Panc1 (cell line): ENCODE measurements at regions of chr12 and their contacts with region 1.

Region 1: GRCh38 chr12:113325916-113326315 is 9.0 kb downstream of the SLC8B1 start:
- DNase-seq: no peak
- ATAC-seq: no peak
- H3K4me3 ChIP-seq: no peak overlapping the region
- H3K27ac ChIP-seq: no peak overlapping the region
- H3K4me1 ChIP-seq: peaks cover 3% of the 10 kb centered on the region; the same call in 1 of the 2 replicates
- H3K27me3 ChIP-seq: no peaks in the 10 kb centered on the region
- CTCF ChIP-seq: no peak

Region 2: GRCh38 chr12:113310489-113310888 is 15.4 kb before region 1 on chr12:
- CTCF ChIA-PET with region 1: interaction called, 19 read pairs
- POLR2A ChIA-PET with region 1: no interaction called
- in situ Hi-C with region 1: no loop called
- intact Hi-C with region 1: no loop called
- DNase-seq: no peak
- ATAC-seq: no peak
- H3K4me3 ChIP-seq: no peak overlapping the region
- H3K27ac ChIP-seq: no peak overlapping the region
- H3K4me1 ChIP-seq: no peaks in the 10 kb centered on the region
- H3K27me3 ChIP-seq: no peaks in the 10 kb centered on the region
- CTCF ChIP-seq: no peak

Region 3: DNA sequence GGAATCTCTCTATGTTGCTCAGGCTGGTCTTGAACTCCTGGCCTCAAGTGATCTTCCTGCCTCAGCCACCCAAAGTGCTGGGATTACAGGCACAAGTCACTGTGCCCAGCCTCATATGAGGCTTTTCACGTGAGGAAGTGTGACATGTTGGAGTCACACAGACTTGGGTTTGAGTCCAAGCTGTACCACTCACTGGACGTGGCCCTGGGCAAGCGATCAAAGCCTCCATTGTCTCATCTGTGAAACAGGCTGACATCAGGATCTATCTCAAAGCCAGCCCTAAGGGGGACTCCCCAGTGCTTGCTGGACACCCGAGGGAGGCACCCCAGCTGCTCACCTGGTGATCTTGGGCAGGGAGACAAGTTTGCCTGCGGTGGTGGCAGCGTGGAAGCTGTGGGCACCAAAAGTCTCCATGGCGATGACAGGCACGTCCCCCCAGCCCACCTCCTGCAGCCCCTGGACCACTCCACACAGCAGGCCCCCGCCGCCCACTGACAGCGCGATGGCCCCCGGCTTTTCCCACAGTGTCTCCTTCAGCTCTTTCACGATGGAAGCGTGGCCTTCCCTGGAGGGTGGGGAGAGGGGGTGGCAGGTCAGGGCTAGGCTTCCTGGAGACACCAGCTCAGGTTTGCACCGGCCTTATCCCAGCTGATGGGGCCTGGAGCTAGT is 71.0 kb after region 1 on chr12:
- CTCF ChIA-PET with region 1: no interaction called
- POLR2A ChIA-PET with region 1: interaction called, 13 read pairs
- in situ Hi-C with region 1: no loop called
- intact Hi-C with region 1: no loop called
- DNase-seq: no peak
- ATAC-seq: 0 out of 2 replicates have a peak, but pooled peaks have one; percentile 11
- H3K4me3 ChIP-seq: no peak overlapping the region
- H3K27ac ChIP-seq: no peak overlapping the region
- H3K4me1 ChIP-seq: no peaks in the 10 kb centered on the region
- H3K27me3 ChIP-seq: no peaks in the 10 kb centered on the region
- CTCF ChIP-seq: no peak